HCT116 (cell line): ENCODE measurements at regions of chr9 and their contacts with region 1.

Region 1: GRCh38 chr9:87250205-87250604 is 247.5 kb upstream of the DAPK1 start:
- DNase-seq: no peak
- ATAC-seq: peak; percentile 44; the same call in 1 of the 2 replicates
- H3K4me3 ChIP-seq: no peak overlapping the region
- H3K27ac ChIP-seq: no peak overlapping the region
- H3K4me1 ChIP-seq: no peaks in the 10 kb centered on the region
- H3K27me3 ChIP-seq: peaks cover 21% of the 10 kb centered on the region
- CTCF ChIP-seq: 0 out of 6 replicates have a peak, but pooled peaks of 2 of the 3 experiments have one; percentile 8 to 14
- POLR2A ChIP-seq: no peak
- RAD21 ChIP-seq: peak; percentile 14; the same call in 1 of the 2 replicates

Region 2: GRCh38 chr9:86955561-86955960 is 294.6 kb before region 1 on chr9:
- CTCF ChIA-PET with region 1: no interaction called
- POLR2A ChIA-PET with region 1: no interaction called
- RAD21 ChIA-PET with region 1: no interaction called
- intact Hi-C with region 1: no loop called
- DNase-seq: no peak
- ATAC-seq: no peak
- H3K4me3 ChIP-seq: no peak overlapping the region
- H3K27ac ChIP-seq: no peak overlapping the region
- H3K4me1 ChIP-seq: no peaks in the 10 kb centered on the region
- H3K27me3 ChIP-seq: peaks cover 47% of the 10 kb centered on the region
- CTCF ChIP-seq: no peak
- POLR2A ChIP-seq: no peak
- RAD21 ChIP-seq: no peak

Region 3: DNA sequence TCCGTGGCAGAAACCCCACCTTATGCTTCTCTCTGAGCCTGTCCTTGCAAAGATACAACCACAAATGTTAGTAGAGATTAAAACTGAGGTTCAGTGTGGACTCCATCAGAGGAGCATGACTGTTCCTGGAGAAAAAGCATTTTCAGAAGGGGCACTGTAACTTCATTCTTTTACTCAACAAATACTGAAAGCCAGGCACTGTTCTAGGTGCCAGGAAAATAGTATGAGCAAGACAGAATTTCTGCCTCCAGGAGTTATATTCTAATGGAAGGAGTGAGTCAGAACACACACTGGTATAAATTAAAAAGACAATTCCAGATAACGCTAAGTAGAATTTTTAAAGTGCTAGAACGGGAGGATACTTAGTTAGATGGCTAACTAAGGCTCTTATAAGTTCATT is 51.5 kb before region 1 on chr9:
- CTCF ChIA-PET with region 1: no interaction called
- POLR2A ChIA-PET with region 1: no interaction called
- RAD21 ChIA-PET with region 1: no interaction called
- intact Hi-C with region 1: loop called (anchors 5 kb)
- DNase-seq: no peak
- ATAC-seq: no peak
- H3K4me3 ChIP-seq: no peak overlapping the region
- H3K27ac ChIP-seq: no peak overlapping the region
- H3K4me1 ChIP-seq: no peaks in the 10 kb centered on the region
- H3K27me3 ChIP-seq: peaks cover 87% of the 10 kb centered on the region
- CTCF ChIP-seq: no peak
- POLR2A ChIP-seq: no peak
- RAD21 ChIP-seq: no peak

Region 4: GRCh38 chr9:87336914-87337333 is 86.7 kb after region 1 on chr9:
- CTCF ChIA-PET with region 1: no interaction called
- POLR2A ChIA-PET with region 1: no interaction called
- RAD21 ChIA-PET with region 1: no interaction called
- intact Hi-C with region 1: no loop called
- DNase-seq: peak; percentile 54
- ATAC-seq: peak; percentile 81
- H3K4me3 ChIP-seq: no peak overlapping the region
- H3K27ac ChIP-seq: no peak overlapping the region
- H3K4me1 ChIP-seq: no peaks in the 10 kb centered on the region
- H3K27me3 ChIP-seq: peaks cover 26% of the 10 kb centered on the region
- CTCF ChIP-seq: peak; percentile 40 to 73 (median 65); a peak in 5 of 6 replicates
- POLR2A ChIP-seq: no peak
- RAD21 ChIP-seq: peak; percentile 84

Region 5: GRCh38 chr9:87375397-87376073 is 125.3 kb after region 1 on chr9:
- CTCF ChIA-PET with region 1: no interaction called
- POLR2A ChIA-PET with region 1: no interaction called
- RAD21 ChIA-PET with region 1: no interaction called
- intact Hi-C with region 1: no loop called
- DNase-seq: no peak
- ATAC-seq: no peak
- H3K4me3 ChIP-seq: no peak overlapping the region
- H3K27ac ChIP-seq: no peak overlapping the region
- H3K4me1 ChIP-seq: no peaks in the 10 kb centered on the region
- H3K27me3 ChIP-seq: peaks cover 6% of the 10 kb centered on the region
- CTCF ChIP-seq: no peak
- POLR2A ChIP-seq: no peak
- RAD21 ChIP-seq: no peak